Common myeloid progenitor, CD34-positive (primary cell): ENCODE measurements at regions of chr7 and their contacts with region 1.

Region 1: GRCh38 chr7:97027427-97028234 is 3.0 kb upstream of the DLX5 start:
- DNase-seq: peak; percentile 81 to 90 (median 88)
- H3K4me3 ChIP-seq: peak overlapping the region in 5 of 7 experiments; percentile 30 to 72 (median 59)
- H3K27ac ChIP-seq: no peak overlapping the region
- H3K4me1 ChIP-seq: peaks cover 0 to 34% (median 23%) of the 10 kb centered on the region in 4 experiments
- H3K27me3 ChIP-seq: peaks cover 19 to 72% (median 48%) of the 10 kb centered on the region in 5 experiments

Region 2: GRCh38 chr7:97003347-97004246 is 24.0 kb before region 1 on chr7:
- CTCF ChIA-PET with region 1: interaction called, 14 read pairs
- POLR2A ChIA-PET with region 1: no interaction called
- DNase-seq: peak in 1 of 3 donors; percentile 24
- H3K4me3 ChIP-seq: no peak overlapping the region
- H3K27ac ChIP-seq: no peak overlapping the region
- H3K4me1 ChIP-seq: peaks cover 0 to 23% (median 12%) of the 10 kb centered on the region in 4 experiments
- H3K27me3 ChIP-seq: peaks cover 42 to 100% (median 57%) of the 10 kb centered on the region in 5 experiments

Region 3: DNA sequence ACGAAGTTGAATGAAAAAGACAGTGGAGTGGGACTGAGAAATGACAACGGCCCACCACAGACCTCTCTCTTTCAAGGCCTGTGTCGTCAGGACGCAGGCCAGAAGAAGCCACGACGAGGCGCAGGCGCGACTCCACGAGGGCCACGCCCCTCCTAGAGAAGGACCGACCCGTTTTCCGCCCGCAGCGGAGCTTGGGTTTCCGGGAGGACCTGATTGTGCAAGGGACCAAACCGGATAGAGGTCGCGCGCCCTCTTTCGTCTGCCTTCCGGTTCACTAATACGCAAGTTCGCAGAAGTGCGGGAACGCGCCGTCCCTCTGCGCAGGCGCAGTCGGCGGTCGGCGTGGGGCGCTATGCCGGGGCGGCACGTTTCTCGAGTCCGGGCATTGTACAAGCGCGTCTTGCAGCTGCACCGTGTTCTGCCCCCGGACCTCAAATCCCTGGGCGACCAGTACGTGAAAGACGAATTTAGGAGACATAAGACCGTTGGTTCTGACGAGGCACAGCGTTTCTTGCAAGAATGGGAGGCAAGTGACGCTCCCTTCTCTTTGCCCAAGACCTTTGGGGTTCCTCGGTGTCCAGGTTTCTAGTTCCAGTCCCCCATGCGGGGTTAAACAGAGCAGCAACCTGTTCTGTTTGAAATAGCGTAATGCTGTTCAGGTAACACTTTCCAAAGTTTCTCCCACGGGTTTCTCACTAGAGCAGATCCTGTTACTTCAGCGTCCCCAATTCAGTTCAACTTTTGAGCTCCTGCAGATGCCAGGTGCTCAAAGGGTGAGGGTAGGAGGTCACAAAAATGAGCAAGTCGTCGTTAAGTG is 89.9 kb after region 1 on chr7 and contains the start of gene SDHAF3:
- CTCF ChIA-PET with region 1: no interaction called
- POLR2A ChIA-PET with region 1: no interaction called
- DNase-seq: peak; percentile 99 to 100 (median 100)
- H3K4me3 ChIP-seq: peak within 1 kb of the TSS; percentile 72 to 97 (median 82)
- H3K27ac ChIP-seq: peak within 1 kb of the TSS; percentile 27 to 83
- H3K4me1 ChIP-seq: peaks cover 14 to 38% (median 23%) of the 10 kb centered on the region in 4 experiments
- H3K27me3 ChIP-seq: no peaks in the 10 kb centered on the region